ENCODE measurements at regions of chr1 and their contacts with region 1.

Region 1: GRCh38 chr1:162276493-162276892 is 100.2 kb downstream of the SPATA46 start:
- DNase-seq: no peak
- ATAC-seq: peak; percentile 61; the same call in 2 of the 3 replicates
- H3K4me3 ChIP-seq: no peak overlapping the region
- H3K27ac ChIP-seq: no peak overlapping the region
- H3K4me1 ChIP-seq: no peaks in the 10 kb centered on the region
- H3K27me3 ChIP-seq: peaks cover 0 to 2% of the 10 kb centered on the region in 2 experiments; a peak in 1 of 4 replicates
- CTCF ChIP-seq: peak in 2 of 3 experiments; percentile 32 to 53; a peak in 4 of 6 replicates
- EP300 ChIP-seq: no peak
- POLR2A ChIP-seq: no peak
- RAD21 ChIP-seq: peak; percentile 62

Region 2: DNA sequence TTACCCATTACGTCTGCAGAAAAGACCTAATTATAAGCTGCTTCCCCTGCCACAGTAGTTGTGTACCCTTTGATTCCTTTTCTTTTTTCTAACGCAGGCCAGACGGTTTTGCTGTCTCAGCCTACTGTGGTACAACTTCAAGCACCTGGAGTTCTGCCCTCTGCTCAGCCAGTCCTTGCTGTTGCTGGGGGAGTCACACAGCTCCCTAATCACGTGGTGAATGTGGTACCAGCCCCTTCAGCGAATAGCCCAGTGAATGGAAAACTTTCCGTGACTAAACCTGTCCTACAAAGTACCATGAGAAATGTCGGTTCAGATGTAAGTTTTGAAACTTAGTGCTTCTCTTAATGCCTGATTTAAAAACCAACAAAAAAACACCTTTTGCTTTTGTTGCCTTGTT is 474.5 kb before region 1 on chr1:
- CTCF ChIA-PET with region 1: no interaction called
- POLR2A ChIA-PET with region 1: no interaction called
- RAD21 ChIA-PET with region 1: no interaction called
- SMC1A ChIA-PET with region 1: no interaction called
- in situ Hi-C with region 1: no loop called
- intact Hi-C with region 1: loop called (anchors 10 kb)
- DNase-seq: no peak
- ATAC-seq: no peak
- H3K4me3 ChIP-seq: no peak overlapping the region
- H3K27ac ChIP-seq: no peak overlapping the region
- H3K4me1 ChIP-seq: no peaks in the 10 kb centered on the region
- H3K27me3 ChIP-seq: no peaks in the 10 kb centered on the region
- CTCF ChIP-seq: no peak
- EP300 ChIP-seq: no peak
- POLR2A ChIP-seq: no peak
- RAD21 ChIP-seq: no peak

Region 3: GRCh38 chr1:162056043-162056442 is 220.4 kb before region 1 on chr1:
- CTCF ChIA-PET with region 1: interaction called, 13 read pairs
- POLR2A ChIA-PET with region 1: interaction called, 5 read pairs
- RAD21 ChIA-PET with region 1: interaction called, 5 read pairs
- SMC1A ChIA-PET with region 1: interaction called, 5 read pairs
- in situ Hi-C with region 1: loop called (anchors 5 kb)
- intact Hi-C with region 1: loop called (anchors 1 kb)
- DNase-seq: peak; percentile 17
- ATAC-seq: peak; percentile 99
- H3K4me3 ChIP-seq: no peak overlapping the region
- H3K27ac ChIP-seq: no peak overlapping the region
- H3K4me1 ChIP-seq: no peaks in the 10 kb centered on the region
- H3K27me3 ChIP-seq: peaks cover 0 to 2% of the 10 kb centered on the region in 2 experiments; a peak in 3 of 4 replicates
- CTCF ChIP-seq: peak; percentile 82 to 90 (median 88)
- EP300 ChIP-seq: no peak
- POLR2A ChIP-seq: no peak
- RAD21 ChIP-seq: peak; percentile 90

Region 4: DNA sequence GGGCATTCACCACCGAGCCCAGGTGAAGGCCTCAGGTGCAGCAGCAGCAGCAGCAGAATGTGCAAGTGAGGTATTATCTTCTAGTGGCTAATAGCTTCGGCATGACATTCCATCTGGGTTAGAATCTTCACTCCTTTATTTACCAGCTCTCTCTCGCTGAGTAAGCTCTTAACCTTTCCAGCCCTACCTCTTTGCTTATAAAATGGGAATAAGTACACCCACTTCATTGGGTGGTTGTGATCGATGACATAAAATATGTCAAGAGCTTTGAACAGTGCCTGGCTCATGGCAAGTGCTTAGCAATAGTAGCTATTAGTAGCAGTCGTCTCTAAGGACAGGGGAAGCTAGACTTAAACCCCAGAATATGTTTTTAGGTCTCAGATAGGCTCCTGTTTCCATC is 57.5 kb before region 1 on chr1:
- CTCF ChIA-PET with region 1: no interaction called
- POLR2A ChIA-PET with region 1: no interaction called
- RAD21 ChIA-PET with region 1: no interaction called
- SMC1A ChIA-PET with region 1: no interaction called
- in situ Hi-C with region 1: no loop called
- intact Hi-C with region 1: no loop called
- DNase-seq: no peak
- ATAC-seq: no peak
- H3K4me3 ChIP-seq: no peak overlapping the region
- H3K27ac ChIP-seq: no peak overlapping the region
- H3K4me1 ChIP-seq: no peaks in the 10 kb centered on the region
- H3K27me3 ChIP-seq: no peaks in the 10 kb centered on the region
- CTCF ChIP-seq: no peak
- EP300 ChIP-seq: no peak
- POLR2A ChIP-seq: no peak
- RAD21 ChIP-seq: no peak

Region 5: GRCh38 chr1:162230096-162230495 is 46.4 kb before region 1 on chr1:
- CTCF ChIA-PET with region 1: no interaction called
- POLR2A ChIA-PET with region 1: no interaction called
- RAD21 ChIA-PET with region 1: no interaction called
- SMC1A ChIA-PET with region 1: no interaction called
- in situ Hi-C with region 1: no loop called
- intact Hi-C with region 1: no loop called
- DNase-seq: no peak
- ATAC-seq: peak; percentile 48
- H3K4me3 ChIP-seq: no peak overlapping the region
- H3K27ac ChIP-seq: no peak overlapping the region
- H3K4me1 ChIP-seq: peaks cover 8% of the 10 kb centered on the region
- H3K27me3 ChIP-seq: no peaks in the 10 kb centered on the region; a peak in 1 of 4 replicates
- CTCF ChIP-seq: 0 out of 6 replicates have a peak, but pooled peaks of 1 of the 3 experiments have one; percentile 3
- EP300 ChIP-seq: no peak
- POLR2A ChIP-seq: no peak
- RAD21 ChIP-seq: no peak